GM10248 (cell line): ENCODE measurements at regions of chr18 and their contacts with region 1.

Region 1: DNA sequence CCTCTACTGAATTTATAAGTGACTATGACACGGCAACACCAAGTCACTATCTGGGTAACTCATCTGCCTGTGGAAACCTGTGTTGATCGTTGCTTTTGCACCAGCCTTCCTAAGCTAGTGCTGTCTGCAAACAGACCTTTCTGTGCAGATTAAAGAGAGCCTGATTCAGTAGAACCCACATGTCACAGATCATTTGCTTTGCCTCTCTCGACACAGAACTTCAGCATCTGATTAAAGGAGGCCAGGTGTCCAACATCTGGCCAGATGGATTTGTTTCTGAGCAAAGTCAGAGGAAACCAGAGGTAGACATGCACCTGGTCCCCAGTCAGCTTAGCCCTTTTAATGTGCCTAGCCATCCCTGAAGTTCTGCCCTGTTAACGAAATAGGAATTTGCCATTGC is 15.0 kb upstream of the TTR start:
- DNase-seq: no peak
- CTCF ChIP-seq: no peak

Region 2: DNA sequence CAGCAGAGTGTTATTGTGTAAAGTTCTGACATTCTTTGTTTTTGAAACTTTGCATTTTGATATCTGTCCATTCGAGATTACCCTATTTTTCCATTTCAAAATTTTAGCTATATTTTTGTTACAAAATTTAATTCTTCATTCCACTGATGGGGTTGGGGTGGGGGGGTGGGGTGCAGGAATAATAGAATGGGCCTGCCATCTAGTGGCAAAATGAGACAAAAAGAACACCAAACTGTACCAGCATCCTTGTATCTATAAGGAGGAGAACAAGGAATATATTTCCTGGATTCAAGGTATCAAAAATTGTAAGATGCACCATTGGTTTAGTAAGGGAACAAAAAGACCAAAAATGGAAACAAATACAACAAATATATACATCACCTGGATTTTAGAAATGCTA is 12.9 kb before region 1 on chr18:
- CTCF ChIA-PET with region 1: interaction called, 16 read pairs
- POLR2A ChIA-PET with region 1: no interaction called
- DNase-seq: peak; percentile 21
- CTCF ChIP-seq: peak; percentile 7